ENCODE measurements at regions of chr21 and their contacts with region 1.

Region 1: GRCh38 chr21:26834181-26834945 is 10.8 kb downstream of the ADAMTS1 start:
- DNase-seq: no peak
- ATAC-seq: no peak
- H3K4me3 ChIP-seq: no peak overlapping the region
- H3K27ac ChIP-seq: no peak overlapping the region
- H3K4me1 ChIP-seq: no peaks in the 10 kb centered on the region
- H3K27me3 ChIP-seq: no peaks in the 10 kb centered on the region

Region 2: GRCh38 chr21:25734904-25735645 is 1099.3 kb before region 1 on chr21 and contains the starts of genes ATP5PF and GABPA:
- intact Hi-C with region 1: loop called in 1 of 2 experiments (anchors 10 kb)
- DNase-seq: peak; percentile 98 to 99
- ATAC-seq: peak; percentile 99
- H3K4me3 ChIP-seq: peak within 1 kb of the TSS; percentile 91 to 92
- H3K27ac ChIP-seq: peak within 1 kb of the TSS; percentile 87 to 91
- H3K4me1 ChIP-seq: no peaks in the 10 kb centered on the region
- H3K27me3 ChIP-seq: no peaks in the 10 kb centered on the region
- total RNA-seq, gene ATP5PF: 80.5 to 94.5 TPM
- total RNA-seq, gene GABPA: 20.3 to 32.8 TPM

Region 3: DNA sequence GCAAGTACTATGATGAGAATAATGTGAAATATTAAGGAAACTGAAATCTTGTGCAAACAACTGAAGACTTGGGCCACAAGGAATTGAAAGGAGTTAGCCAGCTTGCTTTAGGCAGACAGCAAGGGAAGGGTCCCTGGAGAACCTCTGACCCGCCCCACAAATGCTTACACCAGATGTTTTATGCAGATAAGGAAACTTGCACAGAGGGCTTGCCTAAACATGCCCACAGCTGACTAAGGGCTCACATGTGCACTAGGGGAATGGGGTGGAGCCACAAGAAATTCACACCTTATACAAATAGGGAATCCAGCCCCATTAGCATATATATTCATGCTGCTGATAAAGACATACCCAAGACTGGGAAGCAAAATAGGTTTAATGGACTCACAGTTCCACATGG is 175.2 kb before region 1 on chr21:
- intact Hi-C with region 1: no loop called
- DNase-seq: no peak
- ATAC-seq: no peak
- H3K4me3 ChIP-seq: no peak overlapping the region
- H3K27ac ChIP-seq: no peak overlapping the region
- H3K4me1 ChIP-seq: no peaks in the 10 kb centered on the region
- H3K27me3 ChIP-seq: no peaks in the 10 kb centered on the region

Region 4: DNA sequence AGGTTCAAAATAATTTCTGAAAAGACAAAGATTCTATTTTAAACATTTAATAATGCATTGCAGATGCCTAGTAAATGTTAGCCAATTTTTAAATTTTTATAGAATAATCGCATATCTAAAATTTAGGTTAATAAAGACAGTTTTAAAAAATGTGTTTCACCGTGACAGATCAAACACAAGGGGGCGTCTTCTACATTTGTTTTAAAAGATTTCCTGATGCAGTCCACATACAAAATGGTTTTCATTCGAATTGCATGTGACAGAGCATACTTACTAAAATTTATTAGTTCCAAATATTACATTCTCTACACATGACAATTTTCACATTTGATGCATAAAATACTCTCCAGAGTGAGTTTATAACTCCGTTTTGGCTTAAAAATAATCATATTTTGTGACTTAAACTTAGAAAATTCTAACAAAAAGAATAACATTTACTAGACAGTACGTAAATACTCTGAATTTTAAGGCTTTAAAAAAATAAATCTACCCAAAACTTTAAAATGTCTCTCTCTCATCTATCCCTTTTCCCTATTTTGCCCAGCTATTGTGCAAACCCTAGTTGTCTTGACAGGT is 64.7 kb before region 1 on chr21:
- intact Hi-C with region 1: loop called in 1 of 2 experiments (anchors 2 kb)
- DNase-seq: no peak
- ATAC-seq: no peak
- H3K4me3 ChIP-seq: no peak overlapping the region
- H3K27ac ChIP-seq: no peak overlapping the region
- H3K4me1 ChIP-seq: no peaks in the 10 kb centered on the region
- H3K27me3 ChIP-seq: no peaks in the 10 kb centered on the region

Region 5: GRCh38 chr21:26795866-26796329 is 38.5 kb before region 1 on chr21:
- intact Hi-C with region 1: loop called in 1 of 2 experiments (anchors 5 kb)
- DNase-seq: peak in 1 of 2 donors; percentile 55
- ATAC-seq: peak; percentile 88
- H3K4me3 ChIP-seq: no peak overlapping the region
- H3K27ac ChIP-seq: no peak overlapping the region
- H3K4me1 ChIP-seq: peaks cover 0 to under 1% of the 10 kb centered on the region in 2 donors
- H3K27me3 ChIP-seq: no peaks in the 10 kb centered on the region